ENCODE measurements at regions of chr10 and their contacts with region 1.

Region 1: GRCh38 chr10:54880996-54881395 is 80.0 kb upstream of the PCDH15 start:
- DNase-seq: no peak
- H3K4me3 ChIP-seq: no peak overlapping the region
- H3K27ac ChIP-seq: no peak overlapping the region
- H3K4me1 ChIP-seq: no peaks in the 10 kb centered on the region
- H3K27me3 ChIP-seq: no peaks in the 10 kb centered on the region
- CTCF ChIP-seq: no peak
- POLR2A ChIP-seq: no peak

Region 2: DNA sequence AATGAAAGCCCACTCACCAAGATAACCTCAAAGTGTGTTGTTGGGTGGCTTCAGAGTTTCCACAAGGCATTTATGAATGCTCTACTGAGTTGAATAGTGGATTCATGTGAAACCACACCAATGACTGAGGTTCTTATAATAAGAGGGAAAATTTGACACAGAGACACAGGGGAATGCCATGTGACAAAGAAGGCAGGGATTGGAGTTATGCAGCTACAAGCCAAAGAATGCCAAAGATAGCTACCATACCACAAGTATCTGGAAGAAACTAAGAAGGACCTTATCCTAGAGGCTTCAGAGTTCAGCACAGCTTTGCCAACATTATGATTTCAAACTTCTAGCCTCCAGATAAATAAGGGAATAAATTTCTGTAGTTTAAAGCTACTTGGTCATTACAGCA is 12.0 kb before region 1 on chr10:
- intact Hi-C with region 1: loop called (anchors 2 kb)
- DNase-seq: no peak
- H3K4me3 ChIP-seq: no peak overlapping the region
- H3K27ac ChIP-seq: no peak overlapping the region
- H3K4me1 ChIP-seq: no peaks in the 10 kb centered on the region
- H3K27me3 ChIP-seq: no peaks in the 10 kb centered on the region
- CTCF ChIP-seq: no peak
- POLR2A ChIP-seq: no peak

Region 3: DNA sequence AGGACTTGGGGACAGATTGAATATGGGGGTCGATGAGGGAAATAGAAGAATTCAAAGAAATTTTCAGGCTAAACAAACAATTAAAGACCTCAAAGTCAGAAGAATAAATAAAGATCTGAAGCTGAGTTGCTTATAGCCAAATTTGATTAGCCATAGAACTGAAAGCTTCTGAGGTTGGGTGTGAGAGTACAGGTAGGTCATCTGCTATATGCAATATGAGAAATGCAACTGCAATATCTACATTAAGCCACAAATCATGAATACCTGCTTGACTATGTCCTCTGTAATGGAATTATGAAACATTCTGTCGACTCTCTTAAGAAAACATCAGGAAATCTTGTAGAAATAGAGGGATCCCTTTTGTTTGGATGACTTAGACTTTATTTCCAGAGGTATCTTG is 112.2 kb after region 1 on chr10:
- intact Hi-C with region 1: no loop called
- DNase-seq: no peak
- H3K4me3 ChIP-seq: no peak overlapping the region
- H3K27ac ChIP-seq: no peak overlapping the region
- H3K4me1 ChIP-seq: no peaks in the 10 kb centered on the region
- H3K27me3 ChIP-seq: no peaks in the 10 kb centered on the region
- CTCF ChIP-seq: no peak
- POLR2A ChIP-seq: no peak

Region 4: GRCh38 chr10:55033061-55033460 is 152.1 kb after region 1 on chr10:
- intact Hi-C with region 1: no loop called
- DNase-seq: no peak
- H3K4me3 ChIP-seq: no peak overlapping the region
- H3K27ac ChIP-seq: no peak overlapping the region
- H3K4me1 ChIP-seq: no peaks in the 10 kb centered on the region
- H3K27me3 ChIP-seq: no peaks in the 10 kb centered on the region
- CTCF ChIP-seq: no peak
- POLR2A ChIP-seq: no peak

Measured in breast epithelium (tissue), 4 donors.